Dendritic cell treated with granulocyte-macrophage colony-stimulating factor and Interleukin-4, amounts not matched to agents 40 ng/mL and 50 ng/mL, for 4 days (primary cell): ENCODE measurements at regions of chr1 and their contacts with region 1.

Region 1: DNA sequence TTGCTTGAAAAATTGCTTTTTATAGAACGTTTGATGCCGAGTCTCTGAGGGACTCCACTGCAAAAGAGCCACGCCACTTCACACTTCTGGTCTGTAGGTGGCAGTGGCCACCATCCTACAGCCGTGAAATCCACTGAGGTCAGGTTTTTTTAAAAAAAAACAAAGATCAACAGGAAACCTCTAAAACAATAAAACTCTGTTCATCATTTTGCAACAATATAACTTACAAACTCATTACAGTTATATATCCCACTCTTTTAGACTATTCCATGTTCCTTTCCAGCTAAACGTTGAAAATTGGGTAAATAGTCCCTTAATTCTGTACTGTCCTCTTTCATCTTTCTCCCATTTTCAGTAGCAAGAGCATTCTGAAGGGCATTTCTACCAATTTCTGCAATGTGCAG is 64.6 kb upstream of the FMN2 start:
- H3K4me3 Mint-ChIP-seq: no peak overlapping the region
- H3K27ac Mint-ChIP-seq: no peak overlapping the region
- H3K4me1 Mint-ChIP-seq: no peaks in the 10 kb centered on the region
- H3K27me3 Mint-ChIP-seq: no peaks in the 10 kb centered on the region

Region 2: DNA sequence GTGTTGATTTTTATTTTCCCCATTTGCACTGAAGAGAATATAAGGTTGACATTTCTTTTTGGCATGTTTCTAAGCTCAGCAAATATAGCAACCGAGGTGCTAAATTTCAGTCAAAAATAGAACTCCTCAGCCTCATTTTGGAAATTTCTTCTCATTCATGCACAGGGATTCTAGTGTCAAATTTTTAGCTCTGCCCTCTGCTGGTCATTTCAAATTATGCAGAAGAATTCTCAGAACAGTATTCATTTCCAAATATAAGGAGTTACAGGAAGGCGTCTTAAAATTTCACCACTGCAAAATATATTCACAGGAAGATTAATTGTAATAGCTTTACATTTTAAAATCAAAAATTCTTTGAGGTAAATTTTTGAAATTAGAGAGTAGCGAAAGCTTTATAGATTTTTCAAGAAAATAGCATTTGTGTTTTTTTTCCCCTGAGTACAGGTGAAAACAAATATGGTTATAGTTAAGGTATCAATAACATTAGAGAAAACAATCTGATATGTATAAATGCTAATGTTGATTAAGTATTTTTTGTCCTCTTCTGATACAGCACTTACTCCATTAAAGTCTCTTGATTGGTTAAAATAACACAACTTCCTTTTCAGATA is 122.5 kb after region 1 on chr1:
- intact Hi-C with region 1: loop called (anchors 5 kb)
- H3K4me3 Mint-ChIP-seq: no peak overlapping the region
- H3K27ac Mint-ChIP-seq: no peak overlapping the region
- H3K4me1 Mint-ChIP-seq: no peaks in the 10 kb centered on the region
- H3K27me3 Mint-ChIP-seq: no peaks in the 10 kb centered on the region

Region 3: DNA sequence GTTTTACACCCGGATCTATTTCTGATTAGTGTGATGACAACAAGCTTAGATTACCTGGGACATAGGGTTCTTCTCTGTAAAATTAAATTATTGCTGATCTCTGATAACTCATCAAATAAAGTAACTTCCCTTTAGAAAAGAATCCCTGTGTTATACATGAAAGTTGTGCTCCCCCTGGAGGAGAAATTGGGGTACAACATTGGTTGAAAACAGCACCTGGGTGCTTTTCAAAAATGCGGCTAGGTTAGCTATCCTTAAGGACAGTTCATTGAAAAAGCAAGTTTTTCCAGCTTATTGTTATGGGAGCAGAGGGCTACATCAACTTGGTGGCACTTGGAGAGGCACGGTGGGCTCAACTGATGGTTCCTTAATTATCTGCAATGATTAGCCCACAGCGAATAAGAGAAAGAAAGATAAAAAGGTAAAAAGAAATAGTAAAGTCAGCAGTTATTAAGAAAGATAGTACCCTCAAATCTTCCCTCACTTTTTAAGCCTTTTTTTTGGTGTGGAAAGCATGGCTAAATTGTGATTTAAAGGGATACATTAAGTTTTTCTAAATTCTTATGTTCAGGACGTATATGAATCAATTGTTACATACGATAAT is 162.4 kb after region 1 on chr1:
- intact Hi-C with region 1: loop called (anchors 5 kb)
- H3K4me3 Mint-ChIP-seq: no peak overlapping the region
- H3K27ac Mint-ChIP-seq: no peak overlapping the region
- H3K4me1 Mint-ChIP-seq: no peaks in the 10 kb centered on the region
- H3K27me3 Mint-ChIP-seq: peaks cover 7% of the 10 kb centered on the region